ENCODE measurements at regions of chr4 and their contacts with region 1.

Region 1: DNA sequence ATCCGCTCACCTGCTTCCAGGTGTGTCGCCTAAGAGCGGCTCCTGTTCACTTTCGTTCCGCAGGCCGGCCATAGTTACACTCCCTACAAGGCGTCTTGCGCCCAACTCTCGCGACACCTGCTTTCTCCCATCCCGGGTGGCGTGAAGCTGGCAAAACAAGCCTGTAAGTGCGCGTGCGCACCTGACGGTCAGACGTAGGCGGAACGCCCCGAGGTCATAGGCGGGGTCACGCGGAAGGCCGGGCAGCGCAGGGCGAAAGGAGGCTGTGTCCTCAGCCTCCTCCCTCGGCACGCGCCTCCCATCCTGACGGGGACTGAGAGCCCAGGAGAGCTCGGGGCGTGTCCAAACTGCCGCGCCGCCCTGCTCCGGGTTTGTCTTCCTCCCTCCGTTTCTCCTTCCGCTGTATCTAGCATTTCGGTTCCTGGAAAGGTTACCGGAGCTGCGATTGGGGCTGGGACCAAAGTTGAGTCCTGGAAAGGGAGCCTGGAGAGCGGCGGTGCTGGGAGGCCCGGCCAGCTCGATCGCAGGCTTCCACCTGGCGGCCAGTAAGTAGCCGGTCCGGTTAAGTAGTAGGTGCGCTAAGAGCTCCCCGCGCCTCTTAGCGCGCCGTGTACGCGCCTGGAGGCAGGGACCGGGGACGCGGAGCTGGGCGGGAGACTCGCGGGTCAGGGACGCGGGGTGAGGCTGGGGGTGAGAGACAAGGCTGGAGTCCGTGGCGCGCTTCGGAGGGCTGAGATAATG is at the starts of genes ABHD18 and MFSD8:
- DNase-seq: peak; percentile 99
- ATAC-seq: peak; percentile 95
- H3K4me3 Mint-ChIP-seq: peak within 1 kb of the TSS; percentile 91
- H3K27ac Mint-ChIP-seq: peak within 1 kb of the TSS; percentile 97
- H3K4me1 Mint-ChIP-seq: peaks cover 14% of the 10 kb centered on the region
- H3K27me3 Mint-ChIP-seq: no peaks in the 10 kb centered on the region
- CTCF ChIP-seq: no peak
- total RNA-seq, gene ABHD18: 15.9 to 17.8 TPM (median 16.5 TPM) in 3 replicates
- total RNA-seq, gene MFSD8: 13.4 to 17.6 TPM (median 15.0 TPM) in 3 replicates

Region 2: GRCh38 chr4:127880764-127881562 is 84.3 kb before region 1 on chr4 and contains the start of gene PLK4:
- CTCF ChIA-PET with region 1: interaction called, 13 read pairs
- POLR2A ChIA-PET with region 1: interaction called, 37 read pairs
- DNase-seq: peak; percentile 97
- ATAC-seq: peak; percentile 96
- H3K4me3 Mint-ChIP-seq: peak within 1 kb of the TSS; percentile 91
- H3K27ac Mint-ChIP-seq: peak within 1 kb of the TSS; percentile 99
- H3K4me1 Mint-ChIP-seq: peaks cover 12% of the 10 kb centered on the region
- H3K27me3 Mint-ChIP-seq: no peaks in the 10 kb centered on the region
- CTCF ChIP-seq: no peak
- total RNA-seq, gene PLK4: 37.8 to 44.0 TPM (median 38.6 TPM) in 3 replicates

Region 3: GRCh38 chr4:128060699-128061565 is 95.7 kb after region 1 on chr4 and contains the start of gene LARP1B:
- CTCF ChIA-PET with region 1: interaction called, 8 read pairs
- POLR2A ChIA-PET with region 1: interaction called, 53 read pairs
- DNase-seq: peak; percentile 96
- ATAC-seq: peak; percentile 89
- H3K4me3 Mint-ChIP-seq: peak within 1 kb of the TSS; percentile 92
- H3K27ac Mint-ChIP-seq: peak within 1 kb of the TSS; percentile 95
- H3K4me1 Mint-ChIP-seq: peaks cover 31% of the 10 kb centered on the region
- H3K27me3 Mint-ChIP-seq: no peaks in the 10 kb centered on the region
- CTCF ChIP-seq: no peak
- total RNA-seq, gene LARP1B: 31.0 to 35.6 TPM (median 31.1 TPM) in 3 replicates

Region 4: GRCh38 chr4:128068935-128069334 is 103.7 kb after region 1 on chr4:
- CTCF ChIA-PET with region 1: interaction called, 12 read pairs
- POLR2A ChIA-PET with region 1: no interaction called
- DNase-seq: peak; percentile 37
- ATAC-seq: peak; percentile 96
- H3K4me3 Mint-ChIP-seq: no peak overlapping the region
- H3K27ac Mint-ChIP-seq: no peak overlapping the region
- H3K4me1 Mint-ChIP-seq: peaks cover 12% of the 10 kb centered on the region
- H3K27me3 Mint-ChIP-seq: no peaks in the 10 kb centered on the region
- CTCF ChIP-seq: peak; percentile 33; the same call in 1 of the 2 replicates

Region 5: DNA sequence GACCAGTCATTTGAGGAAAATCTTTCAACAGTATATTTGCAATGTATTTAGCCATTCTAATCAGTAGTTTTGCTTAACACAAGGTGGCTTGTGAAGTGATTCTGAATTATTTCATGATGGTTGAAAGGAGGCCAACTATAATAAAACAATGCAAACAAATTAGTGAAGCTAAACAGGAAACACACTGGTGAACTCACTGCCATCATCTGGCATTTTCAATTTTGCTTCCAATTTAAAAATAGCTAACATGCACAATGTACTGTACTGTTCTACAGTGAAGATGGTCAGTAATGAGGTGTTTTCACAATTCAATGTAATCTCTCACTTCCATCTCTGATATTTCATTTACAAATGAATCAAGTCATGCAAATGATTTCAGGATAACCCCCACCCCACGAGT is 291.3 kb after region 1 on chr4:
- CTCF ChIA-PET with region 1: no interaction called
- POLR2A ChIA-PET with region 1: no interaction called
- DNase-seq: no peak
- ATAC-seq: no peak
- H3K4me3 Mint-ChIP-seq: no peak overlapping the region
- H3K27ac Mint-ChIP-seq: no peak overlapping the region
- H3K4me1 Mint-ChIP-seq: peaks cover 7% of the 10 kb centered on the region
- H3K27me3 Mint-ChIP-seq: no peaks in the 10 kb centered on the region
- CTCF ChIP-seq: no peak

Region 6: DNA sequence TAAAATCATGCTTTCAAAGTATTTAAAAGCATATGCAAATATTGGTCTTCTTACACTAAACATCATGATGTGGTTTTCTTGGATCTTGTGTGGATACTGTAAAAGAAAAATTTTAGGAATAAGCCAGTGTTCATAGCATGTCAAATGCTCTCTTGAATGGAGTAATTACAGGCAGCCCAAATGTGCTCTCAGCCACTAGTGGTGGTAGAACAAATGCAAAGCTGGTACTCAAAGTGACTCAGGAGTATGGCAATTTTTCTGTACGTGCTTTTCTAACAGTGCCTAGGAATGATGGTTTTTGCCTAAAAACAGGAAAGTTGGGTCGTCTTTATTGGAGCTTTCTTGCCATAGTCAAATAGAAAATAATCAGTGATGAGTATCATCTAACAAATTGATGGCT is 302.5 kb after region 1 on chr4:
- CTCF ChIA-PET with region 1: no interaction called
- POLR2A ChIA-PET with region 1: no interaction called
- DNase-seq: no peak
- ATAC-seq: no peak
- H3K4me3 Mint-ChIP-seq: no peak overlapping the region
- H3K27ac Mint-ChIP-seq: no peak overlapping the region
- H3K4me1 Mint-ChIP-seq: no peaks in the 10 kb centered on the region
- H3K27me3 Mint-ChIP-seq: peaks cover 6% of the 10 kb centered on the region; the same call in 1 of the 2 replicates
- CTCF ChIP-seq: no peak

Measured in WTC11 (cell line).